Activated T-helper 2 cell treated with anti-CD3 and anti-CD28 coated beads, Interferon-gamma antibody, Interleukin-2, Interleukin-4, amounts not matched to agents 10 μg/mL and 5 μg/mL and 100 μg/mL, durations not matched to agents 14 hours and 24 hours and 36 hours (primary cell): ENCODE measurements at regions of chr13 and their contacts with region 1.

Region 1: DNA sequence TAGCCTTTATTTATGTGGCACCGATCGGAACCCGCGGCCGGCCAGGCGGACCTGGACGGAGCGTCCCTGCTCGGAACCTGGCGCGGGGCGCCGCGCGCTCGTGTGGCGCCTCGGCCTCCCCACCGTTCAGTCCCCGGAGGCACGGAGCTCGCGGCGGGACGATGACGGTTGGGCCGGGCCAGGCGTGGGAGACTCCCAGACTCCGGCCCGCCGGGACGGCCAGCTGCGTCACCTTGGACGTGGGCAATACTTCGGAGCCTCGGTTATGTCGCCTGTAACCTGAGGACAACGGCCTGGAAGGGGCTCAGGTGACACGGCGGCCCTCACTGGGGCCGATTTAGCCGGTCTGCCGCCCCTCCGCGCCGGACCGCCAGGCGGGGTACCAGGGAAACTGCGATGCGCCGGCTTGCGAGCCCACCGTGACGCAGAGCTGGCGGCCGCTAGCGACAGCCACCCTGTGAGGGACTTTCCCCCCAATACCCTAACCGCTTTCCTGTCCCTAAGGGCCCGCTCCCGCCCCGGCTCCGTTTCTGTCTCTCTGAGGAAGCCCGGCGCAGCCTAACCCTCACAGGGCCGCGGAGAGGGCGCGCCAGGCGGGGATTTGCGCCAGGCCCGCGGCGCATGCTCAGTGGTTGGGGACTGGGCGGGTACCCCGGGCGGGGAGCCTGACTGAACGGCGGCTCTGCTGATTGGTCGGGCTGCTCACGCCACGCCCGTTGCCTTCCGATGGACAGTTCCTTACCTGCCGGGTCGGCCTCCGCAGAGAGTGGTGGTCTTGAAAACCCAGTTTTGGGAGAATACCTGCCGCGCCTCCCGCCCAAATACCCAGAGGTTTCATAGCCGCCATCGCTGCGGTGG is 109.5 kb upstream of the DOCK9 start:
- DNase-seq: peak; percentile 91
- H3K4me3 Mint-ChIP-seq: peak overlapping the region; percentile 92
- H3K27ac Mint-ChIP-seq: peak overlapping the region; percentile 93
- H3K4me1 Mint-ChIP-seq: peaks cover 33% of the 10 kb centered on the region
- H3K27me3 Mint-ChIP-seq: no peaks in the 10 kb centered on the region

Region 2: DNA sequence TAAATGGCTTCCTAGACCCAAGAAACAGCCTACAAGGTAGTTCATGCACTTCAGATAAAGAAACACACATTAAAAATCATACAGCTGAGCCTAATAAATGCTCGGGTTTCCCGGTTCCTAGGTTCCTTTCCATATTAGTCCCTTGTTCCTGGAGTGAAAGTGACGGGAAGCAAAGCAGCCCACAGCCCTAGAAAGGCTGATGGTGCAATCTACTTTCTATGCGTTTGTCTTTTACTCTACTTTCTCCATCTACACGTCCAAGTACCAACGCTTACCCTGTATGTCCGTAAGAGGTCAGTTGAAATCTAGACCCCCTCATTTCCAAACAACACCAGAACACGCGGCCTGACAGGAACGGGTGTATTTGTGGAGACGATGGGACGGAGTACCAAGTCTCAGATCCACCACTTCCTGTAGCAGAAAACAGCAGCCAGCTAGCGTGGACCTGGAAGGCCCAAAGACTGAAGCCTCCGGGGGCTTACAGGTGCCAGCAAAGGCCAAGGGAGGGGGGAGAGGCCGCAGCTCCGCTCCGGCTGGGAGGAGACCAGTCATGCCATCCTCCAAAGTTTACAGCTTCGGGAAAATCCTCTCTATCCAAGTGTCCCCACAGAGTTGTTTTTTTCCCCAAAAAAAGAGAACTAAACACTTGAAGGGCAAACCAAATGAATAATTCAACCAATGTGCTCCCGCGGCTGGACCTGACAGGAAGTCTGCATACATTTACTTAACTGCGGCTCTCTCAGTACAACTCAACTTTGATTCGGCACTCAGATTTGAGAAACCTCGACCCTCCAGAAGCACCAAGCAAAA is 544.6 kb before region 1 on chr13:
- intact Hi-C with region 1: no loop called
- DNase-seq: no peak
- H3K4me3 Mint-ChIP-seq: peak overlapping the region; percentile 68
- H3K27ac Mint-ChIP-seq: peak overlapping the region; percentile 82
- H3K4me1 Mint-ChIP-seq: peaks cover 74% of the 10 kb centered on the region
- H3K27me3 Mint-ChIP-seq: no peaks in the 10 kb centered on the region

Region 3: GRCh38 chr13:98556968-98557631 is 530.2 kb before region 1 on chr13:
- intact Hi-C with region 1: no loop called
- DNase-seq: no peak
- H3K4me3 Mint-ChIP-seq: no peak overlapping the region
- H3K27ac Mint-ChIP-seq: peak overlapping the region; percentile 20
- H3K4me1 Mint-ChIP-seq: peaks cover 59% of the 10 kb centered on the region
- H3K27me3 Mint-ChIP-seq: no peaks in the 10 kb centered on the region

Region 4: DNA sequence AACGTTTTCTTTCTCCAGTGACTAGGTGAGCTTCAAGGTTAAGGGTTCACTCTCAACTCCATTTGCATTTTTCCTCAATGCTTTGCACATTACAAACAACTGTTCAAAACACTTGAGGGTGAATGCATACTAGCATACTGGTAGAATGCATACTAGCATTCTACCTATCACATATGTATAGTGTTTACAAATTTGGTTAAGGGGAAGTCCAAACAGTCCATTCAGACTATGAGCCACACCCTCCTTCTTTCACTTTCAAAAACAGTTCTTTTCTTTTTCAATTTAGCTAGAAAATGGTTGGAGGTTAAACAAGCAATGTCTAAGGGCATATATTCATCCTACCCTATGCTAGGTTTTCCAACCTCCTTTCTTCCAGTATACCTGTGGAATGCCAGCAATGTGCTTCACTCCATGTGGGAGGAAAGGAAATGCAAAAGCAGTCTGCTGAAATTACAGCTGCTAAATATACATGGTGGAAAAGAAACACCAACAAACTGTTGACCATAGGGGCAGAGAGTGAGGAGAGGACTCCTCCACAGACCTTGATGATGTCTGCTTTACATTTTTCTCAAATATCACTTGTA is 212.1 kb before region 1 on chr13:
- intact Hi-C with region 1: loop called (anchors 2 kb)
- DNase-seq: no peak
- H3K4me3 Mint-ChIP-seq: peak overlapping the region; percentile 27
- H3K27ac Mint-ChIP-seq: peak overlapping the region; percentile 84
- H3K4me1 Mint-ChIP-seq: peaks cover 31% of the 10 kb centered on the region
- H3K27me3 Mint-ChIP-seq: no peaks in the 10 kb centered on the region

Region 5: DNA sequence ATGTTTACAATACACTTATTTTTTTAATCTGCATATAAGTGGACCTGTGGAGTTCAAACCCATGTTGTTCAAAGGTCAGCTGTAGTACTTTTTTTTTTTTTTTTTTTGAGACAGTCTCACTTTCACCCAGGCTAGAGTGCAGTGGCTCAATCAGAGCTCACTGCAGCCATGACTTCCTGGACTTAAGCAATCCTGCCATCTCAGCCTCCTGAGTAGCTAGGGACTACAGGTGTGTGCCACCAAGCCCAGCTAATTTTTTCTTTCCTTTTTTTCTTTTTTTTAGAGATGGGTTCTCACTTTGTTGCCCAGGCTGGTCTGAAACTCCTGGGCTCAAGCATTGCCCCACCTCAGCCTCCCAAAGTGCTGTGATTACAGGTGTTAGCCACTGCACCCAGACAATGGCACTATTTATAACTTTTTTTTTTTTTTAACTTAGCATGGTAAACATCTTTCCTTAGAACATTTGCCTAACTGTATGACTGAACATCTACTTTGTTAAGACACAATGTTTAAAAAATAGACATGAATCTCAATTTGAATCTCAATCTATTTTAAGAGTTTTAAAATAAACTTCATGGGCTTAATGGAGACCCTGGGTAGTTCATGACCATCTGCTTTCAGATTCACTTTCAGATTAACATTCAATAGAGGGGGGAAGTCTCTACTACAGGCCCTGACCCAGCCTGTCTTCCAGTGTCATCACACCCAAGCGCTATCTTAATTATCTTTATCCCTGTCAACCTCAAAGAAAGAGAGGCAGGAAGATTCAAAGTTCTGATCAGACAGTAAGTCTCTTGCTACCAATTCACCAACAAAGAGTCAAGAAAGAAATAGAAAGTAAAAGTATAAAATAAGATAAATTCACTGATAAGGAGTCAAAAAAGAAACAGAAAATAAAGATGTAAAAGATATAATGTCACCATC is 11.8 kb before region 1 on chr13:
- intact Hi-C with region 1: loop called (anchors 1 kb)
- DNase-seq: peak; percentile 50
- H3K4me3 Mint-ChIP-seq: peak overlapping the region; percentile 45
- H3K27ac Mint-ChIP-seq: peak overlapping the region; percentile 81
- H3K4me1 Mint-ChIP-seq: peaks cover 65% of the 10 kb centered on the region
- H3K27me3 Mint-ChIP-seq: no peaks in the 10 kb centered on the region

Region 6: DNA sequence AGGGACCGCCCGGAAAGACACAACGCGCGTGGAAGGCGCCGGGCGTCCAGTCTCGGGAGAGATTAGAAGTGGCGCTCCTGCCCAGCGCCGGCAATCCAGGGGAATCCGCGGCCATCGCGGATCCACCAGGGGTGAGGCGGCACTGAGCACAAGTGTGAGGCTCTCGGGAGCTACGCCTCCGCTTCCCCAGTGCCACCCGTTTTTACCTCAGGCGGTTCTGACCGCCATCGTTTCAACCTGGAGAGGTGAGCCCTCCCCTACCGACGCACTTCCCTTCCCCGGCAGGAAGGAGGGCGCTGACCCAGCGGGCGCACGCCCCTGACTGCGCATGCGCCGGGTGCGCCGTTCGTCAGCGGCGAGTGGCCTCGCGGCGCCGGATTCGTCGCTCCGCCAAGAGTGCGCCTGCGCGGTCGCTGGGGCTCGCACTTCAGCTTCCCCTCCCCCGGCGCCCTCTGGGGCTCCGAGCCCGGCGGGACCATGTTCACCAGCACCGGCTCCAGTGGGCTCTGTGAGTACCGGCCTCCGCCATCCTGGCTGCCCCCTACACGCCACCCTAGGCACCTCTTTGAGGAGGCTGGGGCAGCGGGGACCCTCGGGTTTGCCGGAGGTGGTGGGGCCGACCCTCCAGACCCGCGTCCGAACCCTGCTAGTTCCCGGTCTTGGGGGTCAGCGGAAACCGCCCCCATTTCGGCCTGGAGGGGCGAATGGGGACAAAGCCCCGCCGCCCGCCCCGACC is 113.3 kb after region 1 on chr13 and contains the start of gene UBAC2:
- intact Hi-C with region 1: loop called (anchors 1 kb)
- DNase-seq: peak; percentile 96
- H3K4me3 Mint-ChIP-seq: peak within 1 kb of the TSS; percentile 97
- H3K27ac Mint-ChIP-seq: peak within 1 kb of the TSS; percentile 93
- H3K4me1 Mint-ChIP-seq: peaks cover 53% of the 10 kb centered on the region
- H3K27me3 Mint-ChIP-seq: no peaks in the 10 kb centered on the region
- total RNA-seq, gene UBAC2: 53.4 and 55.1 TPM in 2 replicates